ENCODE measurements at regions of chr1 and their contacts with region 1.

Region 1: DNA sequence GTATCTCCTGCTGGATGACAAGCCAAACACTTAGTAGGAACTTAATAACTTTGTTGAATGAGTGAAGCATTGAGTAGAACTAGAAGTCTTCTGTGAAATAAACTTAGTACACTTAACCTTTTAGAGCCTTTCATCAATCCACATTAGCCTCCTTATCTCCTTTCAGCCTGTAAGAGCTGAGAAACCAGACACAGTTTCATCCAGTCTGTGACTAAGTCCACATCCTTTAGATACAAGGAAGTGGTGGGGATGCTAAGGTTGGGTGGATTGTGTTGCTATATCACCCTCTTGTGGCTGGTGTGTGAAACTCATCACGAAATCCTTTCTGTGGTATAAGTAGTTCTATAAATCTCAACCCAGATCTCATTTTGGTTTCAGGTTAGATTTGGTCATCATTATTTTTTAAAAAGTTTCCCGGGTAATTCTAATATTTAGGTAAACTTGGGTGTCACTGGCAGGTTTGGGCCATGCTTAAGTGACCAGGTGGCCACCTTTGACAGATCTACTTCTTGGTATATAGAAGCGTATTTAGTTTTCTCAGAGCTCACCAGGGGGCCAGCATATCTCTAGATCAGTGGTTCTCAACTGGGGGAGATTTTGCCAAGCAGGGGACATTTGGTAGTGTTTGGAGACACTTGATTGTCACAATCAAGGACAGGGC is 27.8 kb upstream of the CD84 start:
- DNase-seq: peak; percentile 45
- ATAC-seq: peak; percentile 81
- H3K4me3 Mint-ChIP-seq: no peak overlapping the region
- H3K27ac Mint-ChIP-seq: no peak overlapping the region
- H3K4me1 Mint-ChIP-seq: peaks cover 53% of the 10 kb centered on the region
- H3K27me3 Mint-ChIP-seq: no peaks in the 10 kb centered on the region; the same call in 1 of the 2 replicates
- CTCF ChIP-seq: peak; percentile 56

Region 2: GRCh38 chr1:160428655-160429054 is 178.5 kb before region 1 on chr1:
- CTCF ChIA-PET with region 1: interaction called, 11 read pairs
- POLR2A ChIA-PET with region 1: no interaction called
- DNase-seq: peak; percentile 46
- ATAC-seq: peak; percentile 75
- H3K4me3 Mint-ChIP-seq: no peak overlapping the region
- H3K27ac Mint-ChIP-seq: no peak overlapping the region
- H3K4me1 Mint-ChIP-seq: peaks cover 10% of the 10 kb centered on the region
- H3K27me3 Mint-ChIP-seq: no peaks in the 10 kb centered on the region
- CTCF ChIP-seq: peak; percentile 51; the same call in 1 of the 2 replicates

Region 3: GRCh38 chr1:160544647-160545046 is 62.5 kb before region 1 on chr1:
- CTCF ChIA-PET with region 1: interaction called, 17 read pairs
- POLR2A ChIA-PET with region 1: no interaction called
- DNase-seq: no peak
- ATAC-seq: peak; percentile 74
- H3K4me3 Mint-ChIP-seq: no peak overlapping the region
- H3K27ac Mint-ChIP-seq: no peak overlapping the region
- H3K4me1 Mint-ChIP-seq: 0 out of 2 replicates have a peak, but pooled peaks cover 4% of the 10 kb centered on the region
- H3K27me3 Mint-ChIP-seq: peaks cover 3% of the 10 kb centered on the region; the same call in 1 of the 2 replicates
- CTCF ChIP-seq: no peak; the same call in 1 of the 2 replicates

Region 4: DNA sequence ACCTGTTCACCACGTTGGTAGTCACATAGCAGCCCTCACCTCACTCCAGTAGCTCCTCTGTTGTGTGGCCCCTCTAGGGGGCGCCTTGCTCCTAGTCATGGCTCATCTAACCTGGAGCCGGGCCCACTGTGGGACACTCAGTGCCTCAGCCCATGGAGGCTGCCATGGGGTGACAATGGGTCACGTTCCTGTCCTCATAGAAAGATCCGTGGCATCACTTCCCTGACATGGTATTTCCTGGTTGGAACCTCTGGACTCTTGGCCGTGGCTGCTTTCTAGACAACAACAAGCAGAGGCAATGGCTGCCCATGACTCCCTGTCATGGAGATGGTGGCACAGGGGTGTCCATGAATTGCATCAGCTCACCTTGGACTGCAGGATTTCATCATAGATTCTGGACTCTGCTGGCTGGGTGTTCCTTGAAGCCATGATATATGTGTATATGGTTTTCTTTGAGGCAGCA is 56.5 kb before region 1 on chr1:
- CTCF ChIA-PET with region 1: interaction called, 14 read pairs
- POLR2A ChIA-PET with region 1: no interaction called
- DNase-seq: peak; percentile 78
- ATAC-seq: peak; percentile 95
- H3K4me3 Mint-ChIP-seq: no peak overlapping the region
- H3K27ac Mint-ChIP-seq: no peak overlapping the region
- H3K4me1 Mint-ChIP-seq: 0 out of 2 replicates have a peak, but pooled peaks cover 4% of the 10 kb centered on the region
- H3K27me3 Mint-ChIP-seq: peaks cover 3% of the 10 kb centered on the region; the same call in 1 of the 2 replicates
- CTCF ChIP-seq: peak; percentile 48; the same call in 1 of the 2 replicates

Region 5: DNA sequence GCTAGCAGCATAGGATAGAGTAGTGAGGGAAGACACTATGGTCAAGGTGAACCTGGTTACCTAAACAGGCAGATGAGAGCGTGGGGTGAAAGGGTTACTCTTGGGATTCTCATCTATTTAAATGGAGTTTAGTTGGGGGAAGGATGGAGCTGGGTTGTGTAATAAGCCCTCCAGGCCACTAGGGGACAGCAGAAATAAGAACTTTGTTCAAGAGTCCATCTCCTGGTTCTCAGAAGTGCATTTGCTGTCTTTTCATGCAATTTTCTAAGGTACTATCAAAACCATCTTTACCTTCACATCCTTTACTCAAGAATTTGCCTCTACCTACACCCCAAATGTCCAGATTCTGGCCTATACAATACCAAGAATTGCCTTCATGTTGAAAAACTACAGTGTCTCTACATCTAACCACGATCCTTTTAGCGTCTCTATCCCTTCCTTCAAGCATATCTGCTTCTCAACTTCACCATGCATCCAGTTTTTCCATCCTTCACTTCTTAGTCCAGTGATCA is 11.7 kb after region 1 on chr1:
- CTCF ChIA-PET with region 1: interaction called, 17 read pairs
- POLR2A ChIA-PET with region 1: no interaction called
- DNase-seq: no peak
- ATAC-seq: peak; percentile 41; the same call in 1 of the 2 replicates
- H3K4me3 Mint-ChIP-seq: no peak overlapping the region
- H3K27ac Mint-ChIP-seq: no peak overlapping the region
- H3K4me1 Mint-ChIP-seq: peaks cover 19% of the 10 kb centered on the region
- H3K27me3 Mint-ChIP-seq: no peaks in the 10 kb centered on the region
- CTCF ChIP-seq: peak; percentile 61

Region 6: GRCh38 chr1:160675641-160676410 is 68.7 kb after region 1 on chr1:
- CTCF ChIA-PET with region 1: interaction called, 53 read pairs
- POLR2A ChIA-PET with region 1: no interaction called
- DNase-seq: peak; percentile 75
- ATAC-seq: peak; percentile 76
- H3K4me3 Mint-ChIP-seq: no peak overlapping the region
- H3K27ac Mint-ChIP-seq: no peak overlapping the region; the same call in 1 of the 2 replicates
- H3K4me1 Mint-ChIP-seq: peaks cover 10% of the 10 kb centered on the region
- H3K27me3 Mint-ChIP-seq: no peaks in the 10 kb centered on the region; the same call in 1 of the 2 replicates
- CTCF ChIP-seq: no peak